Posterior vena cava (tissue), 2 donors: ENCODE measurements at regions of chr10 and their contacts with region 1.

Region 1: GRCh38 chr10:84567133-84567532 is 238.7 kb downstream of the CCSER2 start:
- DNase-seq: no peak

Region 2: DNA sequence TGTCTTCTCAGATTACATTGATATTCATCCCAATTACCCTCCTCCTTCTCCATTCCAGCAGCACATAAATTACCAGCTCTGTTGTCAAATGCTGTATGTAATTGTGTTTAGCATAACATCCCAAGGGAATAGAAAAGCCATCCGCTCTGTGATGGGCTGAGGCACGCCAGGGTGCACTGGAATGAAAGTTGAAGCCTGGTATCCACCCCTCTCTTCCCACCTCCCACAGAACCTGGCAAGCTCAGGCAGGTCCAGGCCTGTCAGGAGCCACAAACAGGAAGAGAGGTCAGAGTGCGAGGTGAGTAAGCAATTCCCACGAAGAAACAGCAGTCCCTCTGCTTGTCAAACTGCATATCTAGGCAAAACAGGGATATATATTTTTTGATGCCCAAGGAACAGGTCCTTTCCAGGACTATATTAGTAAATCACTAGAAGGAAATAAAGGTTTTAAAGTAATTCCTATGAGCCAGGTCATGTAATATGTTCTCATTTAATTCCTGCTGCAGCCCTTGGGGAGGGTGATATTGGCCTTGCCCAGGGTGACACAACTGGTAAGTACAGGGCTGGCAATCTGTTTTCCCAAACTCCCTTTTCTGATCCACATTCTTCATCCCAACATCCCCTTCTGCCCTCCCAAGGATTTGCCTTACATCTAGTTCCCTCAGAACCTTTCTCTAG is 583.4 kb before region 1 on chr10:
- intact Hi-C with region 1: no loop called
- DNase-seq: no peak

Region 3: DNA sequence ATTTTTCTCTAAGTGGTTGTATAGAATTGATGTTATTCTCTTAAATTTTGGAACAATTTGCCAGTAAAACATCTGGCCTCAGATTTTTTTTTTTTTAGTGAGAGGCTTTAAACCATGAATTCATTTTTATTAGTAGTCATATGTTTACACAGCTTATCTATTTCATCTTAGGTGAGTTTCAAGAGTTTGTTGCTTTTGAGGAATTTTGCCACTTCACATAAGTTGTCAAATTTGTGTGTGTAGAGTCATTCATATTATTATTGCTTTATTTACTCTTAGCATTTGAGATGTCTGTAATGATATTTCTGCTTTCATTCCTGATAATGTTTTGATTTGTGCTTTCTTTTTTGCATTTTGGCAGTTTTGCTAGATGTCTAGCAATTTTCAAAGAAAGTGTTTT is 106.6 kb before region 1 on chr10:
- intact Hi-C with region 1: no loop called
- DNase-seq: no peak

Region 4: GRCh38 chr10:85986777-85987176 is 1419.6 kb after region 1 on chr10:
- intact Hi-C with region 1: loop called in 1 of 2 experiments (anchors 5 kb)
- DNase-seq: no peak